Activated T-helper 1 cell treated with anti-CD3 and anti-CD28 coated beads, Interleukin-12 subunit alpha, Interleukin-12 subunit beta, Interleukin-2, Interleukin-4 antibody, amounts not matched to agents 30 ng/mL and 10 ng/mL and 1 ng/mL, durations not matched to agents 14 hours and 24 hours and 36 hours (primary cell): ENCODE measurements at regions of chr15 and their contacts with region 1.

Region 1: DNA sequence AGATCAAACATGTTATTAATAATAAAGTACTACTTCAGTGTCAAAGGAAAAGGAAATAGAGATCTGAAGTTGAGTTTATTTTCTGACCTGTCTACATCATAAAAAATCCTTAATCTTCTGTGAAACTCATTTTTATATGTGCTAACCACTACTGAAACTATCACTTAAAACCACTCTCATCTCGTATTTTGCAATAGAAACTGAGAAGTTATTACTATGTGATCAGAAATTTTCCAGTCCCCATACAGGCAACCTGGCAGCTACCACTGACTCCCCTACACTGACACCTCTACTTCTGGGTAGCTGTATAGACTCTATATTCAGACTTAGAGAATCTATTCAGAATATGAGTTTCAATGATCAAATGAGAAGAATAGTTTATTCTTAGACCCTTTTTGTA is 8.3 kb downstream of the HDGFL3 start:
- DNase-seq: no peak
- H3K4me3 Mint-ChIP-seq: peak overlapping the region; percentile 12
- H3K27ac Mint-ChIP-seq: peak overlapping the region; percentile 72
- H3K4me1 Mint-ChIP-seq: peaks cover 53% of the 10 kb centered on the region
- H3K27me3 Mint-ChIP-seq: peaks cover 17% of the 10 kb centered on the region

Region 2: GRCh38 chr15:82778755-82779154 is 420.5 kb before region 1 on chr15:
- intact Hi-C with region 1: no loop called
- DNase-seq: no peak
- H3K4me3 Mint-ChIP-seq: no peak overlapping the region
- H3K27ac Mint-ChIP-seq: no peak overlapping the region
- H3K4me1 Mint-ChIP-seq: no peaks in the 10 kb centered on the region
- H3K27me3 Mint-ChIP-seq: peaks cover 4% of the 10 kb centered on the region

Region 3: GRCh38 chr15:82832601-82833361 is 366.5 kb before region 1 on chr15:
- intact Hi-C with region 1: loop called (anchors 5 kb)
- DNase-seq: peak; percentile 17
- H3K4me3 Mint-ChIP-seq: peak overlapping the region; percentile 57
- H3K27ac Mint-ChIP-seq: peak overlapping the region; percentile 87
- H3K4me1 Mint-ChIP-seq: peaks cover 54% of the 10 kb centered on the region
- H3K27me3 Mint-ChIP-seq: peaks cover 2% of the 10 kb centered on the region

Region 4: GRCh38 chr15:82966671-82967071 is 232.6 kb before region 1 on chr15:
- intact Hi-C with region 1: loop called (anchors 1 kb)
- DNase-seq: peak; percentile 19
- H3K4me3 Mint-ChIP-seq: peak overlapping the region; percentile 13
- H3K27ac Mint-ChIP-seq: no peak overlapping the region
- H3K4me1 Mint-ChIP-seq: peaks cover 12% of the 10 kb centered on the region
- H3K27me3 Mint-ChIP-seq: peaks cover 37% of the 10 kb centered on the region

Region 5: DNA sequence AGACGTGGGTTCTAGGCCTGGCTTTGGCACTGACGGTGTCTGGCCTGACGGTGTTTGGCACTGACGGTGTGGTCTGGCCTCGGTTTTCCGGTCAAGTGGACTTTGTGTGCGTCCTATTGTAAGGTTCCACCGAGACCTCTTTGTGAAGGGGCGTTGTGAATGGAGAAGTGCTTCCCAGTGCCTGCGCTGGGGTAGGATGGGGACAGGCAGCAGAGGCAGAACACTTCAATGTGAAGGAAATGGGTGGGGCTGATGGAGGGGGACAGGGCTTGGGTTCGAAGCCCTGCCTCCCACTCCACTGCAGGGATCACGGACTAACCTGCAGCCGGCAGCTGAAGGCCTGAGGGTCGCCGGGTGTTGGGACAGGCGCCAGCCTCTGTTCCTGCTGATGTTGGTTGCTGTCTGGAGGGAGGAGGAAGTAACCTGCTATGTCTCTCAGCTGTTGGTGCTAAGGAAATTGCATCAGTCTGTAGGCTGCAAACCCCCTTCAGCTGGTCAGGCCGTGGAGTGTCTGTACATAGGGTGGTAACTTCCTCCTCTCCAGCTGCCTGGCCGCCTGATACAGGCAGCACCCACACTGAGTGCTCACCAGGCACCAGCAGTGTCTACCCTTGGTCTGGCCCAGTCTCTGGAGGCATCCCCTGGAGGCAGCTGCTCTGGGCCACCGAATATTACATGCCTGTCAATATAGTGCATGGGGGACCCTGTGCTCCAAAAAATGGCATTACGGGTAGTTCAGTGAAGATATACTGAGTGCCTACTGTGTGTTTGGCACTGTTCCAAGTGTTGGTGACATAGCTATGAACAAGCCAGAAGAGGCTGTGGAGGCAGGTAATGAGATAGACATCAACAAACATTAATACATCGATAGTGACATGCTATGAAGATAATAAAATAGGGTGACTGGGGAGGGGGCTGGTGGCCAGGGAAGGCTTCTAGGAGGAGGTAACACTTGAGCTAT is 90.7 kb before region 1 on chr15:
- intact Hi-C with region 1: loop called (anchors 2 kb)
- DNase-seq: peak; percentile 27
- H3K4me3 Mint-ChIP-seq: peak overlapping the region; percentile 94
- H3K27ac Mint-ChIP-seq: peak overlapping the region; percentile 86
- H3K4me1 Mint-ChIP-seq: peaks cover 44% of the 10 kb centered on the region
- H3K27me3 Mint-ChIP-seq: peaks cover 11% of the 10 kb centered on the region

Region 6: DNA sequence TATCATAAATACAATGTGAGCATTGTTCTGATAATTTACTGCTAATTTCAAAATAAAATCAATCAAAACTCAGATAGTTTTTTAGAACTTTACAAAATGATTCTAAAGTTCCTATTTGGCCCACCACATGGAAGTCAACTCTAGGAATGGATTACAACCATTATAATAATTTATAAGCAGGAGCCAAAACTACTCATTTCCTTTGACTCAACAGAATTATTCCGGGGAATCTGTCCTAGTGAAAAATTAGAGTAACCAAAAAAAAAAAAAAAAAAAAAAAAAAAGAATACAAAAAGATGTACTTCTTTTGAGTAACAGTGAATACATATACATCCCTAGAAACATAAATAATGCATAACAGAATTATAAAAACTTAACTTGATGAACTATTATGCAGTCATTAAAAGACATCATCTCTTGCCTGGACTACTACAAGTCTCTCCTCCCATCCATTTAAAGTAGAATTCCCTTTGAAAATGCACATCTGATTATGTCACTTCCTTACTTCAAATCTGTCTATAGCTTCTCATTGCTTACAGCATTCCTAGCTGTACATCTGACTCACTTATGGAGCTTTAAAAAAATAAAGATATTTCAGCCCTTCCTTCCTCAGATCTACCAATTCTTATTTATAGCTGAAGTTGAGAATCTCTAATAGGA is 35.0 kb before region 1 on chr15:
- intact Hi-C with region 1: loop called (anchors 1 kb)
- DNase-seq: no peak
- H3K4me3 Mint-ChIP-seq: peak overlapping the region; percentile 66
- H3K27ac Mint-ChIP-seq: peak overlapping the region; percentile 87
- H3K4me1 Mint-ChIP-seq: peaks cover 63% of the 10 kb centered on the region
- H3K27me3 Mint-ChIP-seq: peaks cover 1% of the 10 kb centered on the region